ENCODE measurements at regions of chr16 and their contacts with region 1.

Region 1: DNA sequence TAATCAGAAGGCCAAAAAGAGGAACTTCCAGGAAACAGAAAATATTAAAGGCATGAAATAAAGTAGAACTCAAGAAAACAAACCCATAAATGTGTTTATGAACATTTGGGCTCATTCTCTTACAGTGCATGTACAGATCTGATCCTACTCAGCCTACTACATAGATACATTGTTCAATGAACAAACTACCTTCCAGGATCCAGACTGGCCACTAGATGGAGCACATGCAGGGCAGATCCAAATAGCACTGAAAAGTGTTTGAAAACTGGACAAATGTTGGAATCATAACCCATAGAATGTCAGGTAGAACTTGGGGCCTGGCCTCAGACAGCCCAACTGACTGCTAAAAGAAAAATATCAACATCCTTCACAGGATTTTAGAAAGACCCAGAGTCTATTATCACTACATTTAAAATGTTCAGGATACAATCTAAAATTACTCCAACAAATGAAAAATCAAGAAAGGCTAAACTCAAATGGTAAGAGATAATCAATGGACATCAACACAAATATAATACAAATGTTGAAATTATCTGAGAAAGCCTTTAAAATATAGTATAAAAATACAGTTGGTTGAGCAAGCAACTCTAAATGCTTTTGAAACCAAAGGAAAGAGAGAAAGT is 122.4 kb upstream of the NUDT7 start:
- DNase-seq: peak; percentile 61
- H3K4me3 Mint-ChIP-seq: no peak overlapping the region
- H3K27ac Mint-ChIP-seq: no peak overlapping the region
- H3K4me1 Mint-ChIP-seq: no peaks in the 10 kb centered on the region
- H3K27me3 Mint-ChIP-seq: peaks cover 67% of the 10 kb centered on the region
- CTCF ChIP-seq: peak; percentile 79

Region 2: DNA sequence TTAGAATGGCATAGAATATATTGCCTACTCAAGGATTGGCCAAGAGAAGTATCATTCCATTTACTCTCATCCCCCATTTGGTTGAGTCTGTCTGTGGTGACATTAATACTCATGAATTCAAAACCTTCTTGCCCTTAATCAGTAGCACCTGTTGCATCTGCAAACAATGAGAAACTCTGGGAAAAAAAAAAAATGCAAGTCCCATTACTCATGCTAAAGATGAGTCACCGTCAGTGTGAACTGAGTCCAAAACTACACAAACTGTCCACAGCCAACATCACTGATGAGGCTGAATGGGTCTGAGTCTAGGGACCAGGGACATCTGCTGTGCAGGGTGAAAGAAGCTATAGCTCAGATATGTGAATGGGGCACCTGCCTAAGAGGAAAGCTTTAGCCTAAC is 68.2 kb before region 1 on chr16:
- CTCF ChIA-PET with region 1: no interaction called
- intact Hi-C with region 1: no loop called
- DNase-seq: no peak
- H3K4me3 Mint-ChIP-seq: no peak overlapping the region
- H3K27ac Mint-ChIP-seq: no peak overlapping the region
- H3K4me1 Mint-ChIP-seq: no peaks in the 10 kb centered on the region
- H3K27me3 Mint-ChIP-seq: peaks cover 81% of the 10 kb centered on the region
- CTCF ChIP-seq: no peak

Region 3: GRCh38 chr16:77660311-77660710 is 60.4 kb after region 1 on chr16:
- CTCF ChIA-PET with region 1: no interaction called
- intact Hi-C with region 1: loop called (anchors 2 kb)
- DNase-seq: peak; percentile 6
- H3K4me3 Mint-ChIP-seq: no peak overlapping the region
- H3K27ac Mint-ChIP-seq: no peak overlapping the region
- H3K4me1 Mint-ChIP-seq: no peaks in the 10 kb centered on the region
- H3K27me3 Mint-ChIP-seq: peaks cover 17% of the 10 kb centered on the region
- CTCF ChIP-seq: peak; percentile 34

Region 4: DNA sequence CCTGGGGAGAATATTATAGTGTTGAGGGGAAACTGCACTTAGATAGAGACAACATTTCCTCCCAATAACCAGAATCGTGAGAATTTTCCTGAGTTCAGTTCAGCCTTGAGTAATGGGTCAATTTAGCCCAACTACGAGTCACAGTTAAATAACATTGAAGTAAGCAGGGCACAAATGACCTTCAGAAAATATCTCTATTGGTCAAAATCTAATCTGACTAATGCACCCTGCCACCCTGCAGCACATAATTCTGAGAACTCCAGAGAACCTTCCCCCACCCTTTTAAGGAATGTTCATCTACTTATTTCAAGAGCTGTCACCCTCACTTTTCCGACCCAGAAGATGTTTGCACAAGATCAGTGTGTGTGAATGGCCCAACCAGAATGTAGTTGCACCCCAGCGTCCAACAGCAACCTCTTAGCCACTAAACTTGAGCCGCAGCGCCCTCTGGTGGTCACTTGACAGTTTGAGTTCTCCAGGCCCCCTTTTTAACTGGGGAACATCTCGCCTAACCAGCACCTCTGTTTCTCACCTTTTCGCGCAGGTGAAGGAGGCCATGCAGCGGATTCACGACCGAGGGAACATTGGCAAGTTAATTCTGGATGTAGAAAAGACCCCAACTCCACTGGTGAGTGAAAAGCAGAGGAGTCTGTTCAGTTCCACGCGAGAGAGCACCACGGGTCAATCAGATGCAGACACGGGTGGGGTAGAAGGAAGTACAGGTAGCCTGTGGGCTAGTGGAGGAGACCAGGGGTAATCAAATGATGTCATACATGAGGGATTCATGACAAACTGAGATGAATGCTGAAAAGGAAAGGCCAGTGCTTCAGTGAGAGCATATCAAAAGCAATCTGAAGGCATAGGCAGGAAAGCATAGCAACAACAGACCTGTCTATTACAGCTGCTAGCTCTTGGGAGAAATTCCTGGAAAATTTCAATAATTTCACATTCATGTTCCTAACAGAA is 371.7 kb after region 1 on chr16:
- CTCF ChIA-PET with region 1: no interaction called
- intact Hi-C with region 1: loop called (anchors 1 kb)
- DNase-seq: peak; percentile 81
- H3K4me3 Mint-ChIP-seq: no peak overlapping the region
- H3K27ac Mint-ChIP-seq: no peak overlapping the region
- H3K4me1 Mint-ChIP-seq: no peaks in the 10 kb centered on the region
- H3K27me3 Mint-ChIP-seq: peaks cover 43% of the 10 kb centered on the region
- CTCF ChIP-seq: peak; percentile 74

Measured in Calu3 (cell line).